IMR-90 (cell line): ENCODE measurements at regions of chr9 and their contacts with region 1.

Region 1: DNA sequence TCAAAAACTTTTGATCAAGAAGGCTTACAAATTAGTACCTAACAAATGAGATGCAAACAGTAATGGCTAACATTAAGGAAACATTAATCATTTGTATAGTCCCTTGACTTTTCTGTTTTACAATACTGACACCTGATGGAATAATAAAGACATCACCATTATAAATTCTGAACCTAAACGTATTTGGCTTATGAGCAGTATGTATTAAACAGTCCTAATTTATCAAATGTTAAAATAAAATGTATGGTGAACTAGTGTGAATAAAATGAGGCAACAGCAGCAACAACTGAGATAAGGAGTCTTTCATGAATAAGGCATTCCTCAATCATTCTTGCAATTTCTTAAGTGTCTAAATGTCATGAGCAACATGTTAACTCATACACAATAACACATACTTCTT is 6.0 kb downstream of the PUM3 start:
- DNase-seq: peak; percentile 35
- ATAC-seq: 0 out of 2 replicates have a peak, but pooled peaks have one; percentile 10
- H3K4me3 ChIP-seq: peak overlapping the region; percentile 32; the same call in 1 of the 2 replicates
- H3K27ac ChIP-seq: peak overlapping the region; percentile 44; the same call in 1 of the 2 replicates
- H3K4me1 ChIP-seq: peaks cover 14% of the 10 kb centered on the region; the same call in 1 of the 2 replicates
- H3K27me3 ChIP-seq: no peaks in the 10 kb centered on the region
- CTCF ChIP-seq: peak; percentile 47
- POLR2A ChIP-seq: no peak
- RAD21 ChIP-seq: peak; percentile 60

Region 2: DNA sequence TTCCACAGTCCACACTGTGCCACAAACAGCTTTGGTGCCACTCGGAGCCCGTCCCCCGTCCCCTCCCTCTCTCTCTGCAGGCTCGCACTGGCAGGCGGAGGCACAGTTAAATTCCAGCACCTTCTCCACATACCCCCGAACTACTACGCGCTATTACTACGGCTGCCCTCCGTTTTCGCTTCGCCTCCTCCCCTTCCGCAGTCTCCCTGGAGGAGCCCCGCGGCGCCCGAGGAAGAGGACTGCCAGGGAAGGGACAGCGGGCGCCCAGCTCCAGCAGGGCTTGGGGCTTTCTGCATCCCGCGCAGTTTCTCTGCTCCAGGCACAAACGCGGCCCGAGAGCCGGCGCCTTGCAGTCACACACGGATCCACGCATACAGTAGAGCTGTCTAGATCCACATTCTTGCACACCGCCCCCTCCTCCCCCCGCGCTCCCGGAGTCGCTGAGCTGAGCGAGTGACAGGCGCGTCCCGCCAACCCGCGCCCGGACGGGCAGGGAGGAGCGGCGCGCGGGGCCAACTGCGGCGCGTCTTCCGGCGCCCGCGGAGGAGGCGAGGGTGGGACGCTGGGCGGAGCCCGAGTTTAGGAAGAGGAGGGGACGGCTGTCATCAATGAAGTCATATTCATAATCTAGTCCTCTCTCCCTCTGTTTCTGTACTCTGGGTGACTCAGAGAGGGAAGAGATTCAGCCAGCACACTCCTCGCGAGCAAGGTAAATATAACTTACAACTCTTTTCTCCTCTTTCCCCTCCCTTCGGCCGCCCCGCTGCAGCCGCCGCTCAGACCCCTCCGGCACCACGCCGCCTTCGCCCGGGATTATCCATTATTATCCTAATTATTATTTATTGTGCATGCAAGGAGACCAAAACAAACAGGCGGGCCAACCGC is 823.0 kb before region 1 on chr9 and contains the start of gene SMARCA2:
- CTCF ChIA-PET with region 1: no interaction called
- POLR2A ChIA-PET with region 1: no interaction called
- dilution Hi-C with region 1: no loop called
- in situ Hi-C with region 1: no loop called
- intact Hi-C with region 1: loop called (anchors 5 kb)
- DNase-seq: peak; percentile 96
- ATAC-seq: peak; percentile 90
- H3K4me3 ChIP-seq: peak within 1 kb of the TSS; percentile 86
- H3K27ac ChIP-seq: peak within 1 kb of the TSS; percentile 70
- H3K4me1 ChIP-seq: peaks cover 2% of the 10 kb centered on the region
- H3K27me3 ChIP-seq: no peaks in the 10 kb centered on the region
- CTCF ChIP-seq: no peak
- POLR2A ChIP-seq: peak; percentile 57
- RAD21 ChIP-seq: no peak
- total RNA-seq, gene SMARCA2: 26.7 and 29.2 TPM in 2 replicates

Region 3: GRCh38 chr9:2132484-2133082 is 705.3 kb before region 1 on chr9:
- CTCF ChIA-PET with region 1: no interaction called
- POLR2A ChIA-PET with region 1: no interaction called
- dilution Hi-C with region 1: no loop called
- in situ Hi-C with region 1: loop called (anchors 10 kb)
- intact Hi-C with region 1: loop called (anchors 5 kb)
- DNase-seq: peak; percentile 54
- ATAC-seq: peak; percentile 73
- H3K4me3 ChIP-seq: no peak overlapping the region
- H3K27ac ChIP-seq: no peak overlapping the region
- H3K4me1 ChIP-seq: peaks cover 4% of the 10 kb centered on the region; the same call in 1 of the 2 replicates
- H3K27me3 ChIP-seq: no peaks in the 10 kb centered on the region
- CTCF ChIP-seq: peak; percentile 71
- POLR2A ChIP-seq: no peak
- RAD21 ChIP-seq: peak; percentile 85

Region 4: GRCh38 chr9:2241836-2242741 is 595.8 kb before region 1 on chr9:
- CTCF ChIA-PET with region 1: no interaction called
- POLR2A ChIA-PET with region 1: no interaction called
- dilution Hi-C with region 1: no loop called
- in situ Hi-C with region 1: loop called (anchors 10 kb)
- intact Hi-C with region 1: loop called (anchors 5 kb)
- DNase-seq: peak; percentile 88
- ATAC-seq: peak; percentile 99
- H3K4me3 ChIP-seq: peak overlapping the region; percentile 44
- H3K27ac ChIP-seq: peak overlapping the region; percentile 55; the same call in 1 of the 2 replicates
- H3K4me1 ChIP-seq: peaks cover 5% of the 10 kb centered on the region; the same call in 1 of the 2 replicates
- H3K27me3 ChIP-seq: peaks cover 3% of the 10 kb centered on the region
- CTCF ChIP-seq: no peak
- POLR2A ChIP-seq: no peak
- RAD21 ChIP-seq: 0 out of 2 replicates have a peak, but pooled peaks have one; percentile 11

Region 5: DNA sequence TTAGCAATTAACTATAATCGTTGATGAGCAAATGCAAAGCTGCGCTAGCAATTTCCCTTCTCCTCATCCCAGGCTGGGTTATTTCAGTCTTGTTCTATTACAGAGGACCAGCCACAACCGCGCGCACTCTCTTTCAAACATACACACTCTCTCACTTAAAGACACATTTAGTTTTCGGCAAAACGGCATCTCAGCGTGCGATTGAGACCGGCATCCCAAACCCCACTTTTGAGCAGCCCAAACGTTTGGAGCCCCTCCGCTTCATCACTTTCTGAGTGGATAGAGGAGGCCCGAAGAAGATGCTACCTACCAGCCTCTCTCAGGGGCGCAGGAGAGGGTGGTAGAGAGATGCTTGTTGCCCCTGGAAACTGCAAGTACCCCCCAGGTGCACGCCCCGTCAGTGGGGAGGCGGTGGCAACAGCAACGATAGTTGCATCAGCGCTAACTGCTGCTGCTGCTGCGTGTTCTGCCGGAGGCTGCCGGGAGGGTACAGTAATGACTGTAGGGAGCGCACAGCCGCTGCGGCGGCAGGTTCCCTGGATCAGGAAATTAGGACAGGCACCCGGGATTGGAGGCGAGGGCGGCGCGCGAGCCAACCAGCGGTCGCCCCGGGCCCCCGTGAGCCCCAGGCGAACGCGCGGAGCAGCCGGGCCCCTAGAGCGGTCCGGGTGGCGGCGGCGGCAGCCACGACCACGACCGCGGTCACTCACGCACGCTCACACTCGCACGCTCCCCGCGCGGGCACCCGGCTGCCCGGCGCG is 216.8 kb before region 1 on chr9:
- CTCF ChIA-PET with region 1: no interaction called
- POLR2A ChIA-PET with region 1: no interaction called
- dilution Hi-C with region 1: no loop called
- in situ Hi-C with region 1: loop called (anchors 10 kb)
- intact Hi-C with region 1: loop called (anchors 1 kb)
- DNase-seq: peak; percentile 87
- ATAC-seq: peak; percentile 88
- H3K4me3 ChIP-seq: peak overlapping the region; percentile 79
- H3K27ac ChIP-seq: peak overlapping the region; percentile 70
- H3K4me1 ChIP-seq: peaks cover 2% of the 10 kb centered on the region; the same call in 1 of the 2 replicates
- H3K27me3 ChIP-seq: no peaks in the 10 kb centered on the region
- CTCF ChIP-seq: peak; percentile 30
- POLR2A ChIP-seq: peak; percentile 64
- RAD21 ChIP-seq: peak; percentile 42

Region 6: DNA sequence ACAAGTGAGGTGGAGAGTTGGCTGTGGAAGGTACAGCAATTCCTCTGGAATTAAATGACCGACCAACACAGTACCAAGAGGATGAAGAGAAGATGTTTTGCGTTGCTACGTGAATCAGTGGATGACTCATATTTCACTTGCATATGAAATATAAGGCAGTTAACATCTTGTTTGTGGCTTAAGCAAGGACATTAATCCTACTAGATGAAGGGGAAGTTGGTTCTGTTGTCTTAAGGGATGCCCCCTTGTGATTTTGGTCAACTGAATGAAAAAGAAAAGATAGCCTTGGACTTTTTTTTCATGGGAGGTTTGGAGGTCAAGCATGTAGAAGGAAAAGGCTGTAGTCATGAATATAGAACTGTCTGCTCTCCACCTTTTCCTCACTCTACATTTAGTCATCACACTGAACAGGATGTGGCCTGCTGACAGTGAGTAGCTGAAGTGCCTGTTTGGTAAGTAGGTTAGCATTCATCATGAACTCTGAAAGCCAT is 182.5 kb before region 1 on chr9:
- CTCF ChIA-PET with region 1: no interaction called
- POLR2A ChIA-PET with region 1: no interaction called
- dilution Hi-C with region 1: no loop called
- in situ Hi-C with region 1: no loop called
- intact Hi-C with region 1: loop called (anchors 5 kb)
- DNase-seq: peak; percentile 96
- ATAC-seq: peak; percentile 92
- H3K4me3 ChIP-seq: no peak overlapping the region
- H3K27ac ChIP-seq: no peak overlapping the region
- H3K4me1 ChIP-seq: peaks cover 4% of the 10 kb centered on the region; the same call in 1 of the 2 replicates
- H3K27me3 ChIP-seq: no peaks in the 10 kb centered on the region
- CTCF ChIP-seq: no peak
- POLR2A ChIP-seq: no peak
- RAD21 ChIP-seq: no peak; the same call in 1 of the 2 replicates

Region 7: DNA sequence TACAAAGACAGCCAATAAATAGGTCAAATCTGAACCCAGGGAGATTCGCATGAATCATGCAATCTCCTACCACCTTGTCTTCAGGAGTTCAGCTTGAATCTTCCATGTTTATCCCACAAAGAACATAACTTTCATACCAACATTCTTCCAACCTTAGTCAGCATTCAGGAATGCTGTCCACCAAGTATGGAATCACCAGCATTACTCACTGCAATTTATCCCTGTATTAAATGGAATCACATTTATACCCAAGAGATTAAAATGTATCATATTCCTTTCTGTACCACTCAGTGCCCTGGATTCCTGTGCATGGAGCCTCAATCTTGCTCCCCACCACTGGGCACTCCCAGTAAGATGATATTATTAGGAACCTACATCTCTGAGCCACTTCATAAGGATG is 1299.3 kb after region 1 on chr9:
- CTCF ChIA-PET with region 1: no interaction called
- POLR2A ChIA-PET with region 1: no interaction called
- dilution Hi-C with region 1: no loop called
- in situ Hi-C with region 1: loop called (anchors 25 kb)
- intact Hi-C with region 1: no loop called
- DNase-seq: peak; percentile 97
- ATAC-seq: peak; percentile 75
- H3K4me3 ChIP-seq: no peak overlapping the region
- H3K27ac ChIP-seq: peak overlapping the region; percentile 75
- H3K4me1 ChIP-seq: peaks cover 23% of the 10 kb centered on the region
- H3K27me3 ChIP-seq: no peaks in the 10 kb centered on the region
- CTCF ChIP-seq: no peak
- POLR2A ChIP-seq: no peak
- RAD21 ChIP-seq: 0 out of 2 replicates have a peak, but pooled peaks have one; percentile 10